IMR-90 (cell line): ENCODE measurements at regions of chr3 and their contacts with region 1.

Region 1: GRCh38 chr3:47324278-47324865 is 41.6 kb downstream of the KLHL18 start:
- DNase-seq: peak; percentile 88
- ATAC-seq: peak; percentile 93
- H3K4me3 ChIP-seq: no peak overlapping the region
- H3K27ac ChIP-seq: no peak overlapping the region
- H3K4me1 ChIP-seq: peaks cover 14% of the 10 kb centered on the region
- H3K27me3 ChIP-seq: no peaks in the 10 kb centered on the region
- CTCF ChIP-seq: peak; percentile 89
- POLR2A ChIP-seq: no peak
- RAD21 ChIP-seq: peak; percentile 85

Region 2: DNA sequence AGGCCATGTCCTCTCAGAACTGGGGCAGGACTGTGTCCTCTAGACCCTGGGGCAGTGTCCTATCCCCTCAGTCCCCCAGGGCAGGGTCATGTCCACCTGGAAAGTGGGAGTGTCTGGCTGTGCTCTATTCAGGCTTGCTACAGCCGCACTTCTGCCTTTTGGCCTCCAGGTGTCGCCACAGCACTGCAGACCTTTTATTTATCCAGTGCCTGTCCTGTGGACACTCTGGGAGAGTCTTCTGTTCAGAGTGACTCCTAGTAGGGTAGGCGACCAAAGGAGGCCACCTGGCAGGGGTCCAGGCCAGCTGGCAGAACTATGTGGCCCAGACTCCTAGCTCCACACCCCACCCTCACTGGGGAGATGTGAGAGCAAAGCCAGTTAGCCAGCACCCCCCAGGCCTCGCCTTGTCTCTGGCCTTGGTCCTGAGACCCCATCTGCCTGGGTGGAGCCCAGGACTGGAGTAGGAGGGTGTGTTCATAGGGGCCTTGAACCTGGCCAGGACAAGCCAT is 619.3 kb before region 1 on chr3:
- CTCF ChIA-PET with region 1: no interaction called
- POLR2A ChIA-PET with region 1: no interaction called
- dilution Hi-C with region 1: no loop called
- in situ Hi-C with region 1: no loop called
- intact Hi-C with region 1: loop called (anchors 2 kb)
- DNase-seq: peak; percentile 59
- ATAC-seq: peak; percentile 91
- H3K4me3 ChIP-seq: no peak overlapping the region
- H3K27ac ChIP-seq: no peak overlapping the region
- H3K4me1 ChIP-seq: peaks cover 9% of the 10 kb centered on the region; the same call in 1 of the 2 replicates
- H3K27me3 ChIP-seq: peaks cover 31% of the 10 kb centered on the region
- CTCF ChIP-seq: peak; percentile 93
- POLR2A ChIP-seq: 0 out of 2 replicates have a peak, but pooled peaks have one; percentile 32
- RAD21 ChIP-seq: peak; percentile 94

Region 3: GRCh38 chr3:46909535-46910442 is 414.6 kb before region 1 on chr3:
- CTCF ChIA-PET with region 1: no interaction called
- POLR2A ChIA-PET with region 1: no interaction called
- dilution Hi-C with region 1: no loop called
- in situ Hi-C with region 1: loop called (anchors 10 kb)
- intact Hi-C with region 1: no loop called
- DNase-seq: peak; percentile 85
- ATAC-seq: peak; percentile 92
- H3K4me3 ChIP-seq: no peak overlapping the region
- H3K27ac ChIP-seq: no peak overlapping the region
- H3K4me1 ChIP-seq: peaks cover 9% of the 10 kb centered on the region; the same call in 1 of the 2 replicates
- H3K27me3 ChIP-seq: peaks cover 2% of the 10 kb centered on the region; the same call in 1 of the 2 replicates
- CTCF ChIP-seq: peak; percentile 98
- POLR2A ChIP-seq: peak; percentile 51; the same call in 1 of the 2 replicates
- RAD21 ChIP-seq: peak; percentile 90

Region 4: DNA sequence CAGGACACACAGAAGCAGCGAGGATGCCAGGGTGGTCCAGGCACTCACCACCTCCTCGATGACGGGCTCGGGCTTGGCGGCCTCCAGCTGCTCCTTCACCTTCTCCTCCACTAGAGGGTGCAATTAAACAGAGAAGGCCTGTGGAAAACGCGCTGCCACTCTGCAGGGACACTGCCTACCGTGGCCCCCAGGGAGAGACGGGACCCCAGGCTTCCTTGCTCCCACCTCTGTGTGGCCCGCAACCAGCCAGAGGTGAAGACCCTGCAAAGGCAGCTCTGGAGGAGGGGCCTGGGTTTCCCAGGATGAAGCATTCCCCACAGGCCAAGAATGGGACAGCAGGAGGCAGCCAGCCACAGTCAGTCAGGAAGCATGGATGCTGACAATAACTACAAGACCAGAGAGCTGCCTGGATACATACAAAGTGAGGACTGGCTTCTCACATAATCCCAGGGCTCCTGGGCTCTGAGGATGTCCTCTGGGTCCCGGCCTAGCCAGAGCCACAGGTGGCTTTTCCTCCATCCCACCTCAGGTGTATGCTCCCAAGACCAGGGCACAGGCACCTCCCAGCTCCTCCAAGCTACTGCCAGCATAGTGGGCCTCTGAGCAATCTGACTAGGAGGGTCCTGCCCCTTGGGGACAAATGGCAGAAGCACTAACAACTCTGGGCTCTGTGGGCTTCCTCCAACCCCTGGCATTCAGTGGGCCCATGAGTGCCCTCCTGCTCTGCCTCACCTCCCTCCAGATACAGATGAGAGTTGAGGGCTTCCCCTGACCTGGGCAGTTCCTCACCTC is 400.6 kb before region 1 on chr3:
- CTCF ChIA-PET with region 1: no interaction called
- POLR2A ChIA-PET with region 1: no interaction called
- dilution Hi-C with region 1: no loop called
- in situ Hi-C with region 1: loop called (anchors 10 kb)
- intact Hi-C with region 1: loop called (anchors 1 kb)
- DNase-seq: peak; percentile 12
- ATAC-seq: peak; percentile 72; the same call in 1 of the 2 replicates
- H3K4me3 ChIP-seq: no peak overlapping the region
- H3K27ac ChIP-seq: no peak overlapping the region
- H3K4me1 ChIP-seq: no peaks in the 10 kb centered on the region
- H3K27me3 ChIP-seq: no peaks in the 10 kb centered on the region
- CTCF ChIP-seq: peak; percentile 60
- POLR2A ChIP-seq: no peak
- RAD21 ChIP-seq: peak; percentile 75

Region 5: DNA sequence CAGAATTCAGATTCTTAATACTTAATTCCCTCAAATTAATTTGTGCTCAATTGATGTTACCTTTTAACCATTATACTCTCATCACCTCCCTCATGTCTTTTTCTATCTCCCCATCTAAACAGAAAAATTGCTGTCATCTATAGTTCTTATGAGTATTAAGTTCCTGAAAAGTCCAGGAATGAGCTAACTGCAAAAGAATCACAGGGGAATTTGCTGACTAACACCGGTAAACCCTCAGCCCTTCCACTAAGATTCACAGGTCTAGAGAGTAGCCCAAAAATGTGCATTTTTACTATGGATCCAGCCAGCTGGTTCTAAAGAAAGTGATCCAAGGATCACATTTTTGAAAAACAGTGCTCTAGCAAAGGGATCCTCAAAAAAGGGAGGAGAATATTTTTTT is 227.4 kb before region 1 on chr3:
- CTCF ChIA-PET with region 1: no interaction called
- POLR2A ChIA-PET with region 1: no interaction called
- dilution Hi-C with region 1: no loop called
- in situ Hi-C with region 1: no loop called
- intact Hi-C with region 1: loop called (anchors 10 kb)
- DNase-seq: peak; percentile 77
- ATAC-seq: peak; percentile 87
- H3K4me3 ChIP-seq: no peak overlapping the region
- H3K27ac ChIP-seq: peak overlapping the region; percentile 57; the same call in 1 of the 2 replicates
- H3K4me1 ChIP-seq: peaks cover 9% of the 10 kb centered on the region
- H3K27me3 ChIP-seq: no peaks in the 10 kb centered on the region
- CTCF ChIP-seq: no peak
- POLR2A ChIP-seq: no peak
- RAD21 ChIP-seq: no peak

Region 6: GRCh38 chr3:47164007-47164881 is 160.1 kb before region 1 on chr3 and contains the start of gene SETD2:
- CTCF ChIA-PET with region 1: no interaction called
- POLR2A ChIA-PET with region 1: no interaction called
- dilution Hi-C with region 1: no loop called
- in situ Hi-C with region 1: no loop called
- intact Hi-C with region 1: loop called (anchors 2 kb)
- DNase-seq: peak; percentile 90
- ATAC-seq: peak; percentile 91
- H3K4me3 ChIP-seq: peak within 1 kb of the TSS; percentile 85
- H3K27ac ChIP-seq: peak within 1 kb of the TSS; percentile 90
- H3K4me1 ChIP-seq: peaks cover 6% of the 10 kb centered on the region
- H3K27me3 ChIP-seq: no peaks in the 10 kb centered on the region
- CTCF ChIP-seq: peak; percentile 30
- POLR2A ChIP-seq: peak; percentile 8; the same call in 1 of the 2 replicates
- RAD21 ChIP-seq: peak; percentile 27; the same call in 1 of the 2 replicates
- total RNA-seq, gene SETD2: 20.1 and 30.3 TPM in 2 replicates

Region 7: GRCh38 chr3:47210863-47211405 is 113.4 kb before region 1 on chr3:
- CTCF ChIA-PET with region 1: no interaction called
- POLR2A ChIA-PET with region 1: no interaction called
- dilution Hi-C with region 1: no loop called
- in situ Hi-C with region 1: no loop called
- intact Hi-C with region 1: no loop called
- DNase-seq: no peak
- ATAC-seq: no peak
- H3K4me3 ChIP-seq: no peak overlapping the region
- H3K27ac ChIP-seq: no peak overlapping the region
- H3K4me1 ChIP-seq: no peaks in the 10 kb centered on the region
- H3K27me3 ChIP-seq: no peaks in the 10 kb centered on the region
- CTCF ChIP-seq: no peak
- POLR2A ChIP-seq: no peak
- RAD21 ChIP-seq: no peak

Region 8: DNA sequence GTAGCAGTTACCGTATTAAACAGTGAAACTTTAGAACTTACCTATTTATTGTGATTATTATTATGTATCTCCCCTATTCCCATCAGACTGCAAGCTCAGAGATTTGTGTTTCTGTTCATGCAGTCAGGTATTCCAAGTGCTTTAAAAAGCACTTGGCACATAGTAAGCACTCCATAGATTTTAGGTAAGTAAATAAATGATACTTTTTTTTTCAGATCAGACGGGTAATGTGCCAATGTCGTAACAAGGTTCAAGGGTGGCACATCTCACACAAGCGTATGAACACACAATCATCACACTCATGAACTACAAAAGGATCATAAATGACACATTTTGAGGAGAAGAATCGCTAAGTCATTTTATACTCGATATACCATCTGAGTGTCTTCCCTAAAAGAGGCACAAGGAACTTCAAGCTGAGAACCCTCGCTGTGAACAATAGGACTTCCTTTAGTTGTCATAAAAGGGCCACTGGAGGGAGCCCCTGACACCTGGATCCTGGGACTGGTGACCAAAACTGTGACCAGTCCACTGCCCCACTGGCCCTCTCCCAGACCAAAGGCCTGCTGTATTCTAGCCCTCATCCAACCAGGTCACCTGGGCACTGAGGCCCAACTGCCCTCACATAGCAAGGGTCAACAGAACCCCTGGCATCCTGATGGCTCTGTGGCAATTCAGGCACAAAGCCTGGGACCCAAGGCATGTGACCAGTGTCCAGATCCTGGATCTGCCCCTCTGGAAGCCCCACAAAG is 73.9 kb before region 1 on chr3:
- CTCF ChIA-PET with region 1: interaction called, 13 read pairs
- POLR2A ChIA-PET with region 1: no interaction called
- dilution Hi-C with region 1: no loop called
- in situ Hi-C with region 1: no loop called
- intact Hi-C with region 1: no loop called
- DNase-seq: peak; percentile 23
- ATAC-seq: peak; percentile 73
- H3K4me3 ChIP-seq: no peak overlapping the region
- H3K27ac ChIP-seq: no peak overlapping the region
- H3K4me1 ChIP-seq: no peaks in the 10 kb centered on the region
- H3K27me3 ChIP-seq: peaks cover 5% of the 10 kb centered on the region
- CTCF ChIP-seq: peak; percentile 42
- POLR2A ChIP-seq: no peak
- RAD21 ChIP-seq: peak; percentile 47

Region 9: DNA sequence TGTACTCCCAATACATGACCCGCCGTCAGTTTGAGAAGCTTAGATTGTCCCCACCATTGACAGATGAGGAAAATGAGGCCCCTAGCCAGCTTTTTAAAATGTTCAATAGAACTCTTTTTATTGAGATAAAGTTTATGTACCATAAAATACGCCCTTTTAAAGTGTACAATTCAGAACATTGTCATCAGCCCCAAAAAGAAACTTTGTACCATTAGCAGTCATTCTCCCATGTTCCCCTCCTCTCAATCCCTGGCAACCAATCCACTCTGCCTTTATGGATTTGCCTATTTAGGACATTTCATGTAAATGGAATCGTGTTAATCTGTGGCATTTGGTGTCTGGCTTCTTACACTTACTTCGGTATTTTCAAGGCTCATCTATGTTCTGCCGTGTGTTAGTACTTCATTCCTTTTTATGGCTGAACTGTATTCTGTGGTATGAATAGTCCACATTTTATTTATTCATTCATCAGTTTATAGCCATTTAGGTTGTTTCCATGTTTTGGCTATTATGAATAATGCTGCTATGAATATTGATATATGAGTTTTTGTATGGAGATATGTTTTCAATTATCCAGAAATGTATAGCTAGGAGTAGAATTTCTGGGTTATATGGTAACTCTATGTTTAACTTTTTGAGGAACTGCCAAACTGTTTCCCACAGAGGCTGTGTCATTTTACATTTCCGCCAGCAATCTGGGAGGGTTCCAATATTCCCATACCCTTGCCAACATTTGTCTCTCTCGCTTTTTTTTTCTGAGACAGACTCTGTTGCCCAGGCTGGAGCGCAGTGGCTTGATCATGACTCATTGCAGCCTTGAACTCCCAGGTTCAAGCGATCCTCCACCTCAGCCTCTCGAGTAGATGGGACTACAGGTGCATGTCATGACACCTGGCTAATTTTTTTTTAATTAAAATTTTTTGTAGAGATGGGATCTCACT is 41.1 kb after region 1 on chr3:
- CTCF ChIA-PET with region 1: no interaction called
- POLR2A ChIA-PET with region 1: no interaction called
- dilution Hi-C with region 1: no loop called
- in situ Hi-C with region 1: no loop called
- intact Hi-C with region 1: no loop called
- DNase-seq: peak; percentile 76
- ATAC-seq: peak; percentile 76
- H3K4me3 ChIP-seq: no peak overlapping the region
- H3K27ac ChIP-seq: no peak overlapping the region
- H3K4me1 ChIP-seq: no peaks in the 10 kb centered on the region
- H3K27me3 ChIP-seq: no peaks in the 10 kb centered on the region; the same call in none of the 2 replicates
- CTCF ChIP-seq: no peak
- POLR2A ChIP-seq: no peak
- RAD21 ChIP-seq: no peak